Activated CD4-positive, alpha-beta T cell treated with anti-CD3 and anti-CD28 coated beads, Interleukin-2, amount 10 ng/mL, durations not matched to agents 24 days and 14 days (primary cell): ENCODE measurements at regions of chr3 and their contacts with region 1.

Region 1: GRCh38 chr3:51941798-51942602 is at the starts of genes PARP3 and RRP9:
- DNase-seq: peak; percentile 100
- H3K4me3 Mint-ChIP-seq: peak within 1 kb of the TSS; percentile 85
- H3K27ac Mint-ChIP-seq: peak within 1 kb of the TSS; percentile 91
- H3K4me1 Mint-ChIP-seq: peaks cover 26% of the 10 kb centered on the region
- H3K27me3 Mint-ChIP-seq: no peaks in the 10 kb centered on the region
- total RNA-seq, gene PARP3: 17.0 and 17.5 TPM in 2 replicates
- total RNA-seq, gene RRP9: 92.3 and 95.5 TPM in 2 replicates

Region 2: DNA sequence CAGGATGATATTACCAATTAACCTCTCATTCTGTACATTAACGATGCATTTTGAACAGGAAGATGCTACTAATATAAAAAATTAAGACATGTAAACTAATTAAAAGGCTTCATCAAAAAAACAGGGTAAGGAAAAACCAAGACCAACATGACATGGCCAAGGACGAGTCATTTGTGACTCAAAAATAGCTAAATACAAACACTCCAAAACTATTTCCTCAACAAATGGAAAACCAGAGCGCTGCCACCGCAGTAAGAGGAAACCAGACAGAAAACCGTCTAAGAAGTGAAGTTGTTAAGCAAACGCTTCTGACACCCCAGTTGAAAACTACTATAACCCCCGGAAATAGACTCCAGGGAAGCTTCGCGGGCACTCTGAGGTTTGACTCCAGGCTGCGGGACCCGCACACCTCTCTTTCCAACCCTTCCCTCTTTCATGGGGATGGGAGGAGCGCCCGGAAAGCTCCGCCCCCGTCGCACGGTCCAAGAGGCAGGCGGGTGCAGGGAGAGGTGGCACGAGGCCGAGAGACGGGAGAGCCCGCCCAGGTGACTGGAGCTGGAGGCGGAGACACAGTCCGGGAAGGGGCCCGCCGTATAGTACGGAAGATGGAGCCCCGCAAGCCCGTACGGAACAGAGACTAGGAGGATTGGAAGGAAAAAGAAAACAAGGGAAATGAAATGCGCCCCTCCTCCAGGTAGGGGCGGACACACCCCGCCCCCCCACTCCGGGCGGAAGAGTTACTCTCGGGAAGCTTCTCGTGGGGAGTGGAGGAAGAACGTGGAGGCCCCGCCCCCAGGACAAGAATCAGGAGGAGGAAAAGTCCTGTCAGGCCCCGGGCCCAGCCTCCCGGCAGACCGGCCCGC is 442.9 kb before region 1 on chr3:
- intact Hi-C with region 1: loop called (anchors 5 kb)
- DNase-seq: peak; percentile 97
- H3K4me3 Mint-ChIP-seq: peak overlapping the region; percentile 93
- H3K27ac Mint-ChIP-seq: peak overlapping the region; percentile 97
- H3K4me1 Mint-ChIP-seq: peaks cover 17% of the 10 kb centered on the region
- H3K27me3 Mint-ChIP-seq: peaks cover 2% of the 10 kb centered on the region

Region 3: DNA sequence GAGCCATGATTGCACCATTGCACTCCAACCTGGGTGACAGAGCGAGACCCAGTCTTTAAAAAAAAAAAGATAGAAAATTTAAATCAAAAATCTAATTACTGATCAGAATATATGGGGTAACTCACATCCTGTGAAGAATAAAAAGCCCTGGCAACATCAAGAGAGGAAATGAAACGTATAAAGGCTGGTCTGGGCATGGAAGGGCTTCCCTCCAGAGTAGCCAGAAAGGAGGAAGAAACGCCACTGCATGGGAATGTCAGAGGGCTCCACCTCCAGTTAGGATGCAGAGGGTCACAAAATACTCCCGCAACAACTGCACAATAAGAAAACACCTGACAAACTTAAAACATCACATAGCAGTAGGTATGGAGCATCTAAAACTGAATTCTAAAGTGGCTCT is 34.0 kb before region 1 on chr3:
- intact Hi-C with region 1: no loop called
- DNase-seq: no peak
- H3K4me3 Mint-ChIP-seq: no peak overlapping the region
- H3K27ac Mint-ChIP-seq: no peak overlapping the region
- H3K4me1 Mint-ChIP-seq: no peaks in the 10 kb centered on the region
- H3K27me3 Mint-ChIP-seq: no peaks in the 10 kb centered on the region

Region 4: GRCh38 chr3:51967384-51968169 is 25.6 kb after region 1 on chr3 and contains the start of gene PCBP4:
- intact Hi-C with region 1: loop called (anchors 1 kb)
- DNase-seq: peak; percentile 85
- H3K4me3 Mint-ChIP-seq: peak within 1 kb of the TSS; percentile 90
- H3K27ac Mint-ChIP-seq: peak within 1 kb of the TSS; percentile 79
- H3K4me1 Mint-ChIP-seq: peaks cover 11% of the 10 kb centered on the region
- H3K27me3 Mint-ChIP-seq: peaks cover 3% of the 10 kb centered on the region
- total RNA-seq, gene PCBP4: 15.2 and 16.8 TPM in 2 replicates

Region 5: GRCh38 chr3:51982782-51983577 is 41.0 kb after region 1 on chr3 and contains the start of gene ACY1:
- intact Hi-C with region 1: loop called (anchors 1 kb)
- DNase-seq: peak; percentile 95
- H3K4me3 Mint-ChIP-seq: peak within 1 kb of the TSS; percentile 96
- H3K27ac Mint-ChIP-seq: peak within 1 kb of the TSS; percentile 96
- H3K4me1 Mint-ChIP-seq: peaks cover 20% of the 10 kb centered on the region
- H3K27me3 Mint-ChIP-seq: no peaks in the 10 kb centered on the region
- total RNA-seq, gene ACY1: 57.9 and 58.7 TPM in 2 replicates

Region 6: DNA sequence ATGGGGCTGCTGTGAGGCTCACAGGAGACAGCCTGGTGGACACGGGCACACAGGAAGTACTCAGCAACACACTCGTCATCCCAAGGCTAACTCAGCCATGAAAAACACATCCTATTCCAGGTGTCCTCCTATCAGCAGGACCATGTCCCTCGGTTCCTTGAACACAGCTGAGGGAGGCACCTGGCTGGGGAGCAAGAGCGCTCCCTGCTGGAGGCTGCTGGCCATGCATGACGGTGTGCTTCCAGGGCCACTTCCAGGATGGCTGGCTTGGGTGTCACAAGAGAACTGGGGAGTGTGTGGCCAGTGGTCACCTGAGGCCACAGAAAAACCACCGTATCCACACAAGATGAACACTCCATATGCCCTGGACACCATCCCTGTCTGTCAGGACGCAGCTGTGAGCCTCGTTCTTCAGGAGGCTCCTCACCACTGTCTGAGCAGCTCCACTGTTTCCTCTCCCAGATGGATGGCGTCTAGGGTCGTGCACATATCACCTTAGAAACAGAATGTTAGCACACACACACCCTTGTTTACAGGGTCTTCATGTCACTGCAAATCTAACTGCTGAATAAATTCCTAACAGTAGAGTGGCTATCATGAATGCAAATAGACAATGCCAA is 181.2 kb after region 1 on chr3:
- intact Hi-C with region 1: loop called (anchors 2 kb)
- DNase-seq: peak; percentile 94
- H3K4me3 Mint-ChIP-seq: no peak overlapping the region
- H3K27ac Mint-ChIP-seq: no peak overlapping the region
- H3K4me1 Mint-ChIP-seq: peaks cover 27% of the 10 kb centered on the region
- H3K27me3 Mint-ChIP-seq: no peaks in the 10 kb centered on the region

Region 7: DNA sequence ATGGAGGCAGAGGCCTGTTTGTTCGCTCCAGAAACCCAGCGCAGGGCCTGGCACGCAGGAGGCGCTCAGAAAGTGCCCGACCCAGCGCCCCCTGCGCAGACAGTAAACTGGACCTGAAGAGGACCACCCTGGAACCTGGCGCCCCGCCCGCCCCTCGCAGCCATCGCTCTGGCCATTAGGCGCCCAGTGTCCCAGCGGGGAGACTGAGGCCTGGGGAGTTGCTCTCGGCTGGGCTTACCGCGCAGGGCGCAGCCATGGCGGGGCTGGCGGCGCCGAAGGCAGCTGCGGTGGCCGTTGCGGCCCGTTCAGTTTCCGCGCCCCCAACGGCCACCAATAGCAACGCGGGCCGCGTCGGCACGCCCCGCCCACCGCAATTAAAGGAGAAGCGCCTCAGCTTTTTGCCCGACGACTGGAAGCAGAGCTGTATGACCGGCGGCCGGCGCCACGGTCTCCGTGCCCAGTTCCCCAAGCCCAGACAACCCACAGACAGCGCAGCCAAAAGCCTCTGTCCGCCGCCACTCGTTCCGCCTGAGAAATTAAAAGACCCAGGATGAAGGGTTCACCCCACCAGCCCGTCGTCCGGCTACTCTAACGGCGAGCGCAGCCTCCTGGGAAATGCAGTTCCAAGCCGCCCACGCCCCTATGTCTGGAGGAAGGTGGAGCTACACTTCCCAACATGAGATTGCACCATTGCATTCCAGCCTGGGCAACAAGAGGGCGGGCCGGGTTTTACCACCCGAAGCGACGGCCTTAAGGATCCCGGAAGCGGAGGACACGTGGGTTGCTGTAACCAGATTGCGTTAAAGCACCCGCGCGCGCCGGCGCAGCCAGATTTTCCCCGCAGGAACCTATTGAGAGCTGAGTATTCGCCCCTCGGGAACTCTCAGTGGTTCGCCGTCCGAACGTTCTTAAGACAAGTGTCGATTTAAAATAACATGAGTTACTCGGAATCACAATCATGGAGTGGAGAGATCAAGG is 212.4 kb after region 1 on chr3 and contains the start of gene POC1A:
- intact Hi-C with region 1: loop called (anchors 1 kb)
- DNase-seq: peak; percentile 97
- H3K4me3 Mint-ChIP-seq: peak within 1 kb of the TSS; percentile 92
- H3K27ac Mint-ChIP-seq: peak within 1 kb of the TSS; percentile 97
- H3K4me1 Mint-ChIP-seq: peaks cover 20% of the 10 kb centered on the region
- H3K27me3 Mint-ChIP-seq: no peaks in the 10 kb centered on the region
- total RNA-seq, gene POC1A: 23.2 and 24.1 TPM in 2 replicates